Colonic mucosa (tissue), 4 donors: ENCODE measurements at regions of chr12 and their contacts with region 1.

Region 1: GRCh38 chr12:79737875-79738718 is 47.3 kb upstream of the PAWR start:
- DNase-seq: peak; percentile 60
- H3K4me3 ChIP-seq: no peak overlapping the region
- H3K27ac ChIP-seq: no peak overlapping the region
- H3K4me1 ChIP-seq: no peaks in the 10 kb centered on the region
- H3K27me3 ChIP-seq: no peaks in the 10 kb centered on the region
- CTCF ChIP-seq: peak; percentile 64

Region 2: DNA sequence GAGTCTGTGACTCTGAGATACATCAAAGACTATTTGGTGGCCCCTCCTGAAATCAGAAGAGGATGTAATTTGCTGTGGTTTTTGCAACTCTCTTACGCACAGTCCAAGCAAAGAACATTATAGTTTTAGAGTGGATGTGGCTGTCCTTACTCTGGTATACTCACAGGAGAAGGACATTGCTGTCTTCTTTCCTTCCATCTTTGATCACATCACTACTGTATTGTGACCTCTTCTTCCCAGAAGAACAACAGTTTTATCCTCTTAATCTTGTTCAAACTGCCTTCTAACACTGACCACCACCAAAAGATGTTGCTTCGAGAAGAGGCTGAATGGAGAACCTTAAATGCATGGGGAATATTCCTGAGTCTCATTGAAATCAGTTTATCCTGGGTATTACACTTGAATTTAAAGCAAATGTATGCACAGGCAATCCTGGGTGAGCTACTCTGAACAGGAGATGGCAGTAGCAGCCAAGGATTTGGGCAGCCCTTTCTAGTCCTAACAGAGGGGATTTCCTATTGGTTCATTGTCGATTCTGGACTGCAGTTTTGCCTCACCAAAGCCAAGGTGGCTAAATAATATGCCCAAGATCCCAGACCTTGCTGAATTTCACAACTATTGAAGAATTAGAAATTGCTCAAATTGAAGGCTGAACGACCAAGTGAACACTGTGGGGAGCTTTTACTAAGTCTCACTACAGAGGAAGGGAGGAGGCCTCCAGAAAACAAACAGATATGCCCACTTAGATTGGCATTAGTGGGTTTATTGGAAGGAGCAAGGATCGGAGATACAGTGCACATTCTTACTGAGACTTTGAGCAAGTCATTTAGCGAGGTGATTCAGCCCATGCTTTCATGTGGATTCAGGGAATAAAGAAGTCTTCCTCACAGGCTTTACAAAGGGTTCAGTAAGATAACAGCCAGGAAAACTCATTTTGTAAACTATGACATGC is 330.1 kb before region 1 on chr12:
- intact Hi-C with region 1: loop called (anchors 5 kb)
- DNase-seq: peak; percentile 78
- H3K4me3 ChIP-seq: no peak overlapping the region
- H3K27ac ChIP-seq: no peak overlapping the region
- H3K4me1 ChIP-seq: peaks cover 6% of the 10 kb centered on the region
- H3K27me3 ChIP-seq: no peaks in the 10 kb centered on the region
- CTCF ChIP-seq: peak; percentile 63

Region 3: GRCh38 chr12:79426121-79426520 is 312.0 kb before region 1 on chr12:
- intact Hi-C with region 1: loop called (anchors 5 kb)
- DNase-seq: no peak
- H3K4me3 ChIP-seq: no peak overlapping the region
- H3K27ac ChIP-seq: no peak overlapping the region
- H3K4me1 ChIP-seq: no peaks in the 10 kb centered on the region
- H3K27me3 ChIP-seq: no peaks in the 10 kb centered on the region
- CTCF ChIP-seq: no peak

Region 4: DNA sequence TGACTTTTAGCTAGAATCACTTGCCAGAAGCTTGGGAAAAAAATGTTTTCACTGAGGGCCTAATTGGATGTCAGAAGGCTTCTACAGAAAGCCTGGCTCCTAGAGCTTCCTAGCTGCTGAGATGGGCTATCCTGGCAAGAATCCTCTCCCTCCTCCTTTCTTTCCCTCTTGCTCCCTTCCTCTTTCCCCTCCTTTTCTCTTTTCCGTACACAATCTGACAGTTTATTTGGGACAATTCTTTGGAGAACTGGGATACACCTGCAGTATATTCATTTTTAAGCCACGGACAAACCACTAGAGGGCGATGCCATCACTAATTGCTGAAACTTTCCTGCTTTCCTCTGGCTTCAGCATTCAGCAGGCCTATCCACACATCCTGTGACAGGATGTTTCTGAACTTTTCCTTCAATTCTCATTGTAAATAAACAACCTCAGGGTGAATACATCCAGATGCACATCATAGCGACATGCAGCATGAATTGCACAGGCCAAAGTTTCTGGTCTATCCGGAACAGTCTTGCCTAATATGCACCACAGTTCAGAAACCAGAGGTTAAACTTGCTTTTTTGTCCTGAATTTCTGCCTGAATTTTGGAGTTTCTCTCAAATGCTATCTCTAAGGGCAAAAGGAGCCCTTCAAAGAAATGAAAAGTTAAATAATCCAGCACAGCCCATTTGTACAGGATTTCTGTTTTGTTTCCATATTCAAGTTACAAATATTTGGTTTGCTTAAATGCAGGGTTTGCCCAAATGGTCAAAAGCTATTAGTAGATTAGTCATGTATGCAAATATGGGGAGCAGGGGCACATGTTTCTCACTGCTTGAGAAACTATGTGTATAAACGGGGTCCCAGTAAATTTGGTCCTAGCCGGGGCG is 190.1 kb before region 1 on chr12:
- intact Hi-C with region 1: loop called (anchors 5 kb)
- DNase-seq: peak; percentile 59
- H3K4me3 ChIP-seq: no peak overlapping the region
- H3K27ac ChIP-seq: peak overlapping the region; percentile 5
- H3K4me1 ChIP-seq: no peaks in the 10 kb centered on the region
- H3K27me3 ChIP-seq: no peaks in the 10 kb centered on the region
- CTCF ChIP-seq: peak; percentile 55

Region 5: GRCh38 chr12:79954037-79954610 is 216.0 kb after region 1 on chr12:
- intact Hi-C with region 1: no loop called
- DNase-seq: no peak
- H3K4me3 ChIP-seq: no peak overlapping the region
- H3K27ac ChIP-seq: no peak overlapping the region
- H3K4me1 ChIP-seq: no peaks in the 10 kb centered on the region
- H3K27me3 ChIP-seq: no peaks in the 10 kb centered on the region
- CTCF ChIP-seq: no peak